Left ventricle myocardium inferior (tissue), 1 donor: ENCODE measurements at regions of chr10 and their contacts with region 1.

Region 1: GRCh38 chr10:35563261-35563891 is 41.8 kb upstream of the GJD4 start:
- DNase-seq: peak; percentile 40
- H3K4me3 ChIP-seq: no peak overlapping the region
- H3K27ac ChIP-seq: peak overlapping the region; percentile 71
- H3K4me1 ChIP-seq: peaks cover 59% of the 10 kb centered on the region
- H3K27me3 ChIP-seq: no peaks in the 10 kb centered on the region
- CTCF ChIP-seq: peak; percentile 99

Region 2: DNA sequence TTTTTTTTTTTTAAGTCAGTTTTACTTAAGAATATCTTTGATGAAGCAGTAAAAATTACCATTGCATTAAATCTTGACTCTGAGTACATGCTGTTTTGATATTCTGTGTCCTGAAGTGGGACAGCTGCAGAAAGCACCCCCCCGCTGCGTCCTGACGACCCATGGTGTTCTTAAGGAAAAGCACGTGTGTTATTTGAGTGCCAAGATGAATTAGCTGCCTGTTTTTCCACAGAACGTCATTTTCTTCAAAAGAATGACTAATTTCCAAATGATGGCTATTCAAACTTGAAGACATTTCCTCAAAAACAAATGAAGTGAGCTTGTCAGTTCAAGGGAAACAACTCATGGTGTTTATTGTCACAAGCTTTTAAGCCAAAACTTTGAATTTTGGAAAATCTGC is 390.8 kb before region 1 on chr10:
- intact Hi-C with region 1: no loop called
- DNase-seq: peak; percentile 36
- H3K4me3 ChIP-seq: no peak overlapping the region
- H3K27ac ChIP-seq: no peak overlapping the region
- H3K4me1 ChIP-seq: peaks cover 14% of the 10 kb centered on the region
- H3K27me3 ChIP-seq: no peaks in the 10 kb centered on the region
- CTCF ChIP-seq: no peak

Region 3: GRCh38 chr10:35336084-35336831 is 227.1 kb before region 1 on chr10 and contains the start of gene CCNY:
- intact Hi-C with region 1: loop called (anchors 10 kb)
- DNase-seq: peak; percentile 88
- H3K4me3 ChIP-seq: peak within 1 kb of the TSS; percentile 85
- H3K27ac ChIP-seq: peak within 1 kb of the TSS; percentile 94
- H3K4me1 ChIP-seq: peaks cover 93% of the 10 kb centered on the region
- H3K27me3 ChIP-seq: no peaks in the 10 kb centered on the region
- CTCF ChIP-seq: no peak
- total RNA-seq, gene CCNY: 81.1 TPM

Region 4: DNA sequence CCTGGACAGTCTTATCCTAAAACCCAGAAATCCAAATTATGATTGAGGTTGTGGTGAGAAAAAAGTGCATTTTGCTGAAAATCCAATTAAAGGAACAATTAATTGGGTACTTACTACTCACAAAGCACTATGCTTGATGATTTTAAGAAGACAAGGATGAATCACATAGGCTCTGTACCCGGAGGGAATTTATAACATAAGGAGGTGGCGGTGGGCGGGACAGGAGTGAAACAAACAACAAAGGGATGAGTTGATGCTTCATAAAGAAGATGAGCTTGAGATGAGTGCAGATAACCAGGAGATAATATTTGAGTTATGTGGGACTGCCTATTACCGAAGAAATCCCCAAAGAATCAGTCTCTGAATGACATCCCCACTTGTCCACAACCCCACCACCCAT is 249.8 kb after region 1 on chr10:
- intact Hi-C with region 1: no loop called
- DNase-seq: no peak
- H3K4me3 ChIP-seq: no peak overlapping the region
- H3K27ac ChIP-seq: no peak overlapping the region
- H3K4me1 ChIP-seq: no peaks in the 10 kb centered on the region
- H3K27me3 ChIP-seq: no peaks in the 10 kb centered on the region
- CTCF ChIP-seq: no peak

Region 5: DNA sequence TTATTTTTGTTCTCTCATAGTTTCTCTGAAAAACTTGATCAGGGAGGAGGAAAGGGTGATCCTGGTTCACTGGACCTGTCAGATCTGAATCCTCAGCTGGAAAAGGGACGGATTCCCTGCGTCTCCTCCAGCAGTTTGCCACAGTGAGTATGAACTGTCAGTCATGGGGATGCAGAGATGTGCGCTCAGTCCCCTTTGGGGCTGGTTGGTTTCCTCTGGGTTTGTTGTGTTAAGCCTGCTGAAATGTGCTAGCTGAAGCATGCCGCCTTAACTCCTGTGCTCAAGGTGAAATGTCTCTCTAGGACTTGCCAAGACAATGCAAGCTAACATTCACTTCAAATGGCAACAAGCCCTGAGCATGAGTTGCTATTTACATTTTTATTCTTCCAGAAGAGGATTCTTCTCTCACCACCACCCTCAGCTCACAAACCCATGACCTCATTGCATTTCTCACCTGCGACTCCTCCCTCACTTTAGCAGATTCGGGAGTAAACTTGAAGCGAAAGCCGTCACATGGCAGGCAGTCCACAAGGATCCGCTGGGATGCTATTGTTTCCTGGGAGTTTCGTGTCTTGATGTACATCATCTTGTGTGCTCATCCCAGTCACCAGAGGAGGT is 271.6 kb after region 1 on chr10:
- intact Hi-C with region 1: no loop called
- DNase-seq: no peak
- H3K4me3 ChIP-seq: no peak overlapping the region
- H3K27ac ChIP-seq: no peak overlapping the region
- H3K4me1 ChIP-seq: no peaks in the 10 kb centered on the region
- H3K27me3 ChIP-seq: no peaks in the 10 kb centered on the region
- CTCF ChIP-seq: no peak